Esophagus muscularis mucosa (tissue), 4 donors: ENCODE measurements at regions of chr6 and their contacts with region 1.

Region 1: GRCh38 chr6:105402939-105403935 is at the start of gene PREP:
- DNase-seq: no peak
- H3K4me3 ChIP-seq: peak within 1 kb of the TSS; percentile 73 to 87 (median 80)
- H3K27ac ChIP-seq: peak within 1 kb of the TSS; percentile 86 to 90 (median 87)
- H3K4me1 ChIP-seq: peaks cover 25 to 40% (median 32%) of the 10 kb centered on the region in 4 donors
- H3K27me3 ChIP-seq: no peaks in the 10 kb centered on the region
- CTCF ChIP-seq: peak; percentile 59 to 69 (median 63)
- EP300 ChIP-seq: no peak
- POLR2A ChIP-seq: no peak
- total RNA-seq, gene PREP: 17.9 to 21.6 (median 19.0) TPM

Region 2: DNA sequence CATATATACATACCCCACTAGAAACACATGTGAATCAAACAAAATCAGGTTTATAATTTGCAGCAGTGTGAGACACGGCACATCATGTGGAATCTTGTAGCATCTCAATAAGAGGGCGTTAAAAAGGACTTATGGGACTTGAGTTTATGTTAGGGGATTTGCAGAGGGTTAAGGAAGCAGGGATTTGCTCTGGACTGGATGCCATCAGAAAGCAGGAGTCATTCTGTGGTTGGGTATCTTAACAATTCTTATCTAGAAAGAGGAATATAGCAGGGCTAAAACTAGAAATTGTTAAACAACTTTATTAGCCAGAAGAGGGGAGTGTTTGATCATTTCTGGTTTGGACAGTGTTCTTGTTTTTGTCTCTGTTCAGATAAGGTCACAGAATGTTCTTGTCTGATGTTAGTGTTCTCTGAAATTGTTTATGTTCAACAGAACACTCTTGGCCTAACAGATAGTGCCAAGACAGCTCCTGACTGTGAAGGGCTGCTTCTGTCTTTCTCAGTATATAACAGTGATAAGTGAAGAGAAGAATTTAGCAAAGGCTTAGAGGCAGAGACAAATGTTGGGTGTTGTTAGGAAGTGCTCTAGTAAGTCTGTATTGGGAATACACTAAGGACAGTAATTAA is 407.1 kb before region 1 on chr6:
- intact Hi-C with region 1: loop called (anchors 10 kb)
- DNase-seq: no peak
- H3K4me3 ChIP-seq: no peak overlapping the region
- H3K27ac ChIP-seq: peak overlapping the region; percentile 62 to 78 (median 71)
- H3K4me1 ChIP-seq: peaks cover 4 to 24% (median 21%) of the 10 kb centered on the region in 4 donors
- H3K27me3 ChIP-seq: no peaks in the 10 kb centered on the region
- CTCF ChIP-seq: peak; percentile 30 to 50 (median 46)
- EP300 ChIP-seq: no peak
- POLR2A ChIP-seq: no peak

Region 3: DNA sequence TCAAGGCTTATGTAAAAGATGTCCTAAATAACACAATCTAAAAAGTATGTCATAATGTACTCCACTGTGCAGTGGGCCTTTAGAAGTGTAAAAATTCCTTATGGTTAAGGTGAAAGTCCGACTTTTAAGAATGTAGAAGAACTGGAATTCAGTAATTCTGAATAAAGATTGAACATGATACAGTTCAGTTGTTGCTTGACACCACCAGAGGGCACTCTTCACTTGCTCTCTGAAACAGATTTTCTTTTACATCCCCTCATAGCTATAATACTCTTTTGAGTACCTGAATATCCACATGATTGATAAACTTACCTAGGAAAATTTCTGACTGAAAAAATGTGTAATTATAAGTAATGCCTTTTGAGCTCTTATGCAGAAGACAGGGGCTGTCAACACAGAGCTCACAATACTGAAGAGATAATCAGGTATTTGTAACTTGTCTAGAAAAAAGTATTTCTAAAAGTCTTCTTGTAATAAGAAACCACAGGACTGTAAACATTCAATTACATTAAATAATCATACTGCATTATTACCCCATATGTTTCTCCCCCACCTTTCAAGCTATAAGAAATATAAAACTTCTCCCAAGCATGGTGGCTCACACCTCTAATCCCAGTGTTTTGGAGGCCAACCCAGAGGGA is 315.5 kb before region 1 on chr6:
- intact Hi-C with region 1: loop called (anchors 5 kb)
- DNase-seq: no peak
- H3K4me3 ChIP-seq: no peak overlapping the region
- H3K27ac ChIP-seq: no peak overlapping the region
- H3K4me1 ChIP-seq: no peaks in the 10 kb centered on the region
- H3K27me3 ChIP-seq: no peaks in the 10 kb centered on the region
- CTCF ChIP-seq: peak; percentile 68 to 88 (median 83)
- EP300 ChIP-seq: no peak
- POLR2A ChIP-seq: no peak

Region 4: DNA sequence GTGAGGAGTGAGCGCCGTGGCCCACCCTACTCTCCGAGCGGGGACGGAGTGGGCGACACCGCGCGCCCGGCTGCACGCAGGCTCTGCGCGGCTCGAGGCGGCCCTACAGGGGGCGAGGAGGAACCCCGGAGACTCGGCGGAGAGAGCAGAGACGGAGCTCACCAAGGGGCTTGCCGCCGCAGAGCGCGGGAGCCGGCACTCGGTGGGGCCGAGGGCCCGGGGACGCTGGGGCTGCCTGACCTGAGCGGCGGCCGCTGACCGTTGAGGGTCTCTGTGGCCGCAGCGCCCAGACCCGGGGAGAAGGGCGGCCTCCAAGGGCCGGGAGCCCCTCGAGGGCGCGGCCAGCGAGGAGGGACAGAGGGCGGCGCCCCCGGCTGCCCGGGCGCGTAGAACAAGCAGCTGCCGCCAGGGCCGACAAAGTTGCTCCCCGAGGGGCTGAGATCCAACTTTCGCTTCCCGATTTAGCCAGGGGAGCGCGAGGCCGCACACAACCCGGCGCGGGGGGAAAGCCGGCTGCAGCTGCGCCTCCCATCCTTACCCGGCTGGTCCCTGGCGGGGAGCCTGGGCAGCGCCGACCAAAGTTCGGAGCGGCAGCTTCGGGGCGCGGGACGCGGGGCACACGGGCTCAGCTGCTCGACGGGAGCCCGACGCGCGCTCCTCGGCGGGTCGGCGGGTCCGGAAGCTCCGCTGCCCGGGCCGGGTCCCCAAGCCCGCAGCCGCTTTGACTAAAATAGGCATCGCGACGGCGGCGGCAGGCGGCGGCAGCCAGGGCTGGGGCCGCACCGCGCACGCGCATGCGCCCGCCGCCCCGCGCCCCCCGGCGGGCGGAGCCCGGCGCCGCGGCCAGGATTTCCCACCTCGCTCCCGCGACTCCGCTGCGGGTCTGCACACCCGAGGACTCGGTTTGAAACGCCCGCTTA is 266.5 kb before region 1 on chr6:
- intact Hi-C with region 1: loop called (anchors 10 kb)
- DNase-seq: no peak
- H3K4me3 ChIP-seq: peak overlapping the region; percentile 83 to 97 (median 88)
- H3K27ac ChIP-seq: peak overlapping the region; percentile 88 to 91 (median 90)
- H3K4me1 ChIP-seq: peaks cover 0 to 30% (median 24%) of the 10 kb centered on the region in 4 donors
- H3K27me3 ChIP-seq: no peaks in the 10 kb centered on the region
- CTCF ChIP-seq: peak in 2 of 3 experiments; percentile 17 to 39
- EP300 ChIP-seq: no peak
- POLR2A ChIP-seq: no peak

Region 5: DNA sequence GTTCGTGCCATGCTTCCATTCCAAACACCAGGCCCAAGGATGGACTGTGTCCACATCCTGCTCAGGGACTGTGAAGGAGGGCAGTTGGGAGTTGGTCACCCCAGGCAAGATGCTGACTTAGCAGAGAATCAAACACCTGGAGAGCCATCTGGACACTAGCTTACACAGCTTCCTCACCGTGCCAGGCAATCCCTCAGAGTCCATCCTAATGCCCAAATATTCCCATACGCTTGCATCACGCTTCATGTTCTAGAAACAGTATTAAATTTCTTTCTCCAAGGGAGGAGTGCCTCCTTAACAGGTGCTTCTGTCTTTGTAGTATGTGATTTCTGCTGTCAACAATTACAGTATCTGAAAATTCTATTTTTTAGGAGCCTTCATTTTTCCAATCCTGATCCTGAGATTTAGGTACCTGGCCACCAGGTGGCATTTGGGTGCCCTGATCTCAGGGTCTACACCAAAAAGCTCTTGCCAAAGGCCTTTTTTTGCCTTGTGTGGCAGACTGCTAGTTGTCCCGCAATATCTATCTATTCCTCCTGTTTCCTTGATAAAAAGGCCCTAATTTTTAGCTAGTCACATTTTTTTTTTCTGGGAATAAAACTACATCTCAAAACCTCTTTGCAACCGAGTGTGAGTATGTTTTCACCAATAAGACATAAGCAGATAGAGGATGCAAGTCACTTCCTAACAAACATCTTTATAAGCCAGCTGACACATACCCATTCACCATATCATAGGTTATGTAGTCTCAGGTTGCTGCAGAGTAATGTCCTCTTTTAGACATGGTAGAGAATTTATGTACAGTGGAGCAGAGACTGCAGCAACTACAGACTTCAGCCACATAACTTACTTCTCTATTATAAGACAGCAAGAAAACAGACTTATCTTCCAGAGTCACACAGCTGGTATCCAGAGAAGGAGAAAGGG is 85.4 kb before region 1 on chr6:
- intact Hi-C with region 1: loop called (anchors 5 kb)
- DNase-seq: peak; percentile 68
- H3K4me3 ChIP-seq: no peak overlapping the region
- H3K27ac ChIP-seq: no peak overlapping the region
- H3K4me1 ChIP-seq: peaks cover 0 to 7% (median 0%) of the 10 kb centered on the region in 4 donors
- H3K27me3 ChIP-seq: no peaks in the 10 kb centered on the region
- CTCF ChIP-seq: peak in 2 of 3 experiments; percentile 19 to 25
- EP300 ChIP-seq: no peak
- POLR2A ChIP-seq: no peak

Region 6: DNA sequence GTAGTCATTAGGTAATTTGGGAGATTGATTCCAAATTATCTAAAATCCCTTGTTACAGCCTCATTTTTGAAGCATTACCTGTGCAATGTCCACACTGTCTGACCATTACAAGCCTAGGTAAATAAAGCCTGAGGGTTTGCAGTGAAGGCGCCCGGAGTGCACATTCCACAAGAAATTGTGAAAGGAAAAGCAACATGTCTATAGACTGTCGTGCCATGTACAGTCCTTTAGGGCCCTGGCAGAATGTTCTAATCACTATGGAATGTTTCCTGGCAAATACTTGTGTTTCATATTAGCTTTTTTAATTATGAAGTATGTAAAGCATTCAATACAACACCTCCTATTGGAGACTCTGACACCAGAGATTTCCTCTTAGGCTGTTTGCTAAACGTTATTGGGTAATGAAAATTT is 29.2 kb before region 1 on chr6:
- intact Hi-C with region 1: no loop called
- DNase-seq: no peak
- H3K4me3 ChIP-seq: no peak overlapping the region
- H3K27ac ChIP-seq: no peak overlapping the region
- H3K4me1 ChIP-seq: no peaks in the 10 kb centered on the region
- H3K27me3 ChIP-seq: no peaks in the 10 kb centered on the region
- CTCF ChIP-seq: no peak
- EP300 ChIP-seq: no peak
- POLR2A ChIP-seq: no peak